ENCODE measurements at regions of chr5 and their contacts with region 1.

Region 1: GRCh38 chr5:137320056-137321045 is 178.8 kb downstream of the SPOCK1 start:
- DNase-seq: no peak
- ATAC-seq: no peak
- H3K4me3 Mint-ChIP-seq: no peak overlapping the region
- H3K27ac Mint-ChIP-seq: no peak overlapping the region
- H3K4me1 Mint-ChIP-seq: no peaks in the 10 kb centered on the region
- H3K27me3 Mint-ChIP-seq: peaks cover 30% of the 10 kb centered on the region

Region 2: DNA sequence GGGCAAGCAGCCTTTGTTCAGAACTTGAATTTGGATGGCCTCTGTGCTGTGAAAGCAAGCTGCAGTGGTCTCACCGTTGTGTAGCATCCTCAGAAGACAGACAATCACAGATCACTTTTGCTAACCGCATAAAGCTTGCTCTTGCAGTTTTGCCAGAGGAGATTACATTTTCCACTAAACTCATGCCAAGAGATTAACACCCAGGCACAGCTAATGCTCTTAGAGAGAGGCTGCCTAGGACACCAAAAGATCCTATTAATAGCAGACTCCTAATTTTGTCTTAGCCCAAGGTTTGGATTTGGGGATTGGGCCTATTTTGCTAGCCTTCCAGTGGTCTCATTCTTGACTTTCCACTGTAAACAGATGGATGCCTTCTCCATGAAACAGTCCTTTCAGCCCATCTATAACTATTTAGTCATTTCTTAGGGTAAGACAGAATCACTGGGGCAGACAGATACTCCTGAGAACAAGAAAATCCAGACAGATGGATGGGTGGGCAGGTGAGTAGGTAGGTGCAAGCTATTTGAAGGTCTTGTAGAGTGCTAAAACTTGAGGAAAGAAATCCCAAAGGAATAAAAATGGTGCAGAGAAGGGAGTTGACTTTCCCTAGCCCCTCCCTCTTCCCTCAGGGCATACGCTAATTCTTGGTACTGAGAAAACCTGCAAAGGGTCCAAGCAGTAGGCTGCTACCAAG is 327.4 kb before region 1 on chr5:
- CTCF ChIA-PET with region 1: no interaction called
- DNase-seq: no peak
- ATAC-seq: no peak
- H3K4me3 Mint-ChIP-seq: no peak overlapping the region
- H3K27ac Mint-ChIP-seq: no peak overlapping the region
- H3K4me1 Mint-ChIP-seq: no peaks in the 10 kb centered on the region
- H3K27me3 Mint-ChIP-seq: no peaks in the 10 kb centered on the region

Region 3: DNA sequence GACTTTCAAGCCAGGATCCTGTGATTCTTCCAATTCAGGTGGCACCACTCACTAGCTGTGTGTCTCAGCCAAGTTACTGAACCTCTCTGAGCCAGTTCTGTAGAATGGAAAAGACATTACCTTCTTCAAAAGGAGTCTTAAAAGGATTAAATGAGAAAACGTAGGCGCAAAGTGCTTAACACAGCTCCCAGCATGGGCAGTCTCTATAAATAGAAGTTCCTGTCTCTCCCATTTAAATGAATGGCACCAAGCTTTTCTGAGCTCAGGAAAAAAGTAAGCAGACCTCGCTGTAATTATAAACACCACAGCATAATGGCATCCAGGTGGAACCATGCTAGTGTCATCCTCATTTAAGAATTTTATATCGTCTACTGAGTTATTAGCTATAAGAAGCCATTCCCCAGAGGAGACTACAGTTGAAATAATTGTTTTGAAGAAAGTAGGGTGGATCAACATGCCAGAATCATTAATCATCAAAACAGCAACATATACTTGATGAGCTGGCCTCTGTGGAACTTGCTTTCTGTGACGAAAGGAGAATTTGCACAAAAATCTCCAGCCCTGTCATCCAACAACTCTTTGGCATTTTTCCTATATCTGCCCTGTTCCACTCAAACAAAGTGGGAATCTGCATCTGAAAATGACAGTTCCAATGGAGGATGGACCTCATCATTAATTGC is 10.2 kb before region 1 on chr5:
- CTCF ChIA-PET with region 1: interaction called, 10 read pairs
- DNase-seq: no peak
- ATAC-seq: no peak
- H3K4me3 Mint-ChIP-seq: no peak overlapping the region
- H3K27ac Mint-ChIP-seq: no peak overlapping the region
- H3K4me1 Mint-ChIP-seq: no peaks in the 10 kb centered on the region
- H3K27me3 Mint-ChIP-seq: peaks cover 18% of the 10 kb centered on the region

Region 4: GRCh38 chr5:137498736-137499505 is 178.6 kb after region 1 on chr5 and contains the start of gene SPOCK1:
- CTCF ChIA-PET with region 1: interaction called, 26 read pairs
- DNase-seq: peak; percentile 64
- ATAC-seq: peak; percentile 92
- H3K4me3 Mint-ChIP-seq: no peak within 1 kb of the TSS
- H3K27ac Mint-ChIP-seq: no peak within 1 kb of the TSS
- H3K4me1 Mint-ChIP-seq: no peaks in the 10 kb centered on the region
- H3K27me3 Mint-ChIP-seq: peaks cover 35% of the 10 kb centered on the region
- total RNA-seq, gene SPOCK1: 0.16 to 0.38 TPM

Measured in activated CD8-positive, alpha-beta memory T cell treated with anti-CD3 and anti-CD28 coated beads, Interleukin-2, amount 10 ng/mL, durations not matched to agents 7 days and 5 days (primary cell).